Ascending aorta (tissue), 2 donors: ENCODE measurements at regions of chr9 and their contacts with region 1.

Region 1: DNA sequence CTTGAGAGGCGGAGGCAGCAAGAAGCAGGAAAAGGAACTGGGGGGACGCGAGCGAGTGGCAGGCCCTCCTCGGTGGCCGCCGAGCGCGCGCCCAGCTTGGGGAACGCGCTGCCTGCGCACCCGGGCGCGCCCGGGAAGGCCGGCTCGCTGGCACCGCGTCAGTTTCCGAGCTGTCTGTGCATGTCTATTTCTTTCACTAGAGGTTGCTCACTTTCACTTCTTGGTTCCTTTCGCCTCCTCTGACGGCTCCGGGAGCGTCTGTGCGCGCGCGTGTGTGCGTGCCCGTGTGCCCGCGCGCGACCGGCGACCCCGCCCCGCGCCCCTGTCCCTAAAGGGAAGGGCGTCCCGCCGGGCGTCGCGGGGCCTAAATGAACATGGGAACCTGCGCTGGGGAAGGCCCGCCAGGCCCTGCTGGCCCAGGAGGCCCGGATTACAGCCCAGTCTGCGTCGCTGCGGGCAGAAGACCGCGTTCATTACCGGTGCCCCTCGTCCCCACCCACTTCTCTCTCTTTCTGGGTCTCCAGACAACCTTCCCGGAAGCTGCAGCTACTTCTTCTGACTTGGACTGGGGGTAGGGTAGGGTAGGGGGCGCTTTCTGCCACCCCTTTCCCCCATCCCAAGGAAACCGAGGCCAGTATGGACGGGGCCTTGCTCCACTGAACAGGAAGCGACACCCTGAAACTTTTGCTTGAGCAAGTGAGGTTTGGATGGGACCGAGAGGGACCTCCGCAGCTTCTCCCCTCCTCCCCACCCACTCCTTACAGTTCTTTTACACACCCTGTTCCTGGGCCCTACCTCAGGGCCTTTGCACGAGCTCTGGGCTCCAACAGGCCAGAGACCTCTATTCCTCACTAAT is 205.7 kb upstream of the IER5L start:
- DNase-seq: peak; percentile 41 to 86
- H3K4me3 ChIP-seq: peak overlapping the region; percentile 70 to 76
- H3K27ac ChIP-seq: peak overlapping the region; percentile 93 to 95
- H3K4me1 ChIP-seq: peaks cover 4 to 17% of the 10 kb centered on the region in 2 donors
- H3K27me3 ChIP-seq: no peaks in the 10 kb centered on the region
- CTCF ChIP-seq: peak in 2 of 3 experiments; percentile 16 to 33

Region 2: GRCh38 chr9:129413537-129414376 is 30.0 kb after region 1 on chr9:
- intact Hi-C with region 1: loop called (anchors 2 kb)
- DNase-seq: peak; percentile 96 to 99
- H3K4me3 ChIP-seq: peak overlapping the region; percentile 72 to 82
- H3K27ac ChIP-seq: peak overlapping the region; percentile 99 to 100
- H3K4me1 ChIP-seq: peaks cover 12 to 28% of the 10 kb centered on the region in 2 donors
- H3K27me3 ChIP-seq: no peaks in the 10 kb centered on the region
- CTCF ChIP-seq: peak in 2 of 3 experiments; percentile 2 to 26